ENCODE measurements at regions of chr11 and their contacts with region 1.

Region 1: GRCh38 chr11:65274735-65275682 is 13.2 kb downstream of the POLA2 start:
- DNase-seq: peak; percentile 43
- H3K4me3 ChIP-seq: no peak overlapping the region
- H3K27ac ChIP-seq: no peak overlapping the region
- H3K4me1 ChIP-seq: peaks cover 7% of the 10 kb centered on the region
- CTCF ChIP-seq: peak; percentile 75

Region 2: GRCh38 chr11:64905516-64906313 is 369.3 kb before region 1 on chr11:
- CTCF ChIA-PET with region 1: no interaction called
- POLR2A ChIA-PET with region 1: no interaction called
- intact Hi-C with region 1: no loop called
- DNase-seq: no peak
- H3K4me3 ChIP-seq: no peak overlapping the region
- H3K27ac ChIP-seq: no peak overlapping the region
- H3K4me1 ChIP-seq: no peaks in the 10 kb centered on the region
- CTCF ChIP-seq: no peak

Region 3: DNA sequence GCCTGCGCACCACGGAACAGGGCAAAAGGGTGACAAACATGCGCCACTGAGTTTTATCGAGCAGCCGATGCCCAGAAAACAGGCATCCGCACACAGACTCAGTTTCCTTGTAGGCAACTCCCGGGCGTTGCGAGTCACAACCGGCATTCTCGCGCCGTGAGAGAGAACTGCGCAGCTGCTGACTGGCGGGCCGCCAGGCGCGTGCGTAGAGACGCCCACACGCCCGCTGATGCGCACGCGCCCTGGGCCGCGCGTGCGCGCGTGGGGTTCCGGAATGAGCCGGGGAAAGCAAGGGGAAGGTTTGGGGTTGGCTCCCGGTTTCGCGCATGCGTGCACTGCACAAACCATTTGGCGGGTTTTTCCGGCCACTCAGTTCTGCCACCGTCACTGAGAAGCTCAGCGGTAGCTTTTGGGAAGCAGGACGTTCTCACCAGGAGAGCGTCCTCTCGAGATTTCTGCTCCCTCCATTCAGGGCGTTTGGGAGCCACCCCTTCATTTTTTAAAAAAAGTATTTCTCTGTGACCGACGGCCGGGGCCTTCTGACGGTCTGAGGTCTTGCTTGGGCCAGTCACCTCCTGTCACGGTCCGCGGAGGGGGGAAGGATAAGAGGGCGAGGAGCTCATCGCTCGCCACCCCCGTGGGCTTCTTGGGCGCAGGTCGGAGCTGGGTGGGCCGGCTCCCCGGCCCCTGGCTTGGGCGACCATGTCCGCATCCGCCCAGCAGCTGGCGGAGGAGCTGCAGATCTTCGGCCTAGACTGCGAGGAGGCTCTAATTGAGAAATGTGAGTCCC is 13.2 kb before region 1 on chr11 and contains the start of gene POLA2:
- CTCF ChIA-PET with region 1: interaction called, 3 read pairs
- POLR2A ChIA-PET with region 1: interaction called, 11 read pairs
- intact Hi-C with region 1: no loop called
- DNase-seq: peak; percentile 98
- H3K4me3 ChIP-seq: peak within 1 kb of the TSS; percentile 78
- H3K27ac ChIP-seq: peak within 1 kb of the TSS; percentile 70
- H3K4me1 ChIP-seq: peaks cover 25% of the 10 kb centered on the region
- CTCF ChIP-seq: no peak
- total RNA-seq, gene POLA2: 47.5 and 50.0 TPM in 2 replicates

Region 4: DNA sequence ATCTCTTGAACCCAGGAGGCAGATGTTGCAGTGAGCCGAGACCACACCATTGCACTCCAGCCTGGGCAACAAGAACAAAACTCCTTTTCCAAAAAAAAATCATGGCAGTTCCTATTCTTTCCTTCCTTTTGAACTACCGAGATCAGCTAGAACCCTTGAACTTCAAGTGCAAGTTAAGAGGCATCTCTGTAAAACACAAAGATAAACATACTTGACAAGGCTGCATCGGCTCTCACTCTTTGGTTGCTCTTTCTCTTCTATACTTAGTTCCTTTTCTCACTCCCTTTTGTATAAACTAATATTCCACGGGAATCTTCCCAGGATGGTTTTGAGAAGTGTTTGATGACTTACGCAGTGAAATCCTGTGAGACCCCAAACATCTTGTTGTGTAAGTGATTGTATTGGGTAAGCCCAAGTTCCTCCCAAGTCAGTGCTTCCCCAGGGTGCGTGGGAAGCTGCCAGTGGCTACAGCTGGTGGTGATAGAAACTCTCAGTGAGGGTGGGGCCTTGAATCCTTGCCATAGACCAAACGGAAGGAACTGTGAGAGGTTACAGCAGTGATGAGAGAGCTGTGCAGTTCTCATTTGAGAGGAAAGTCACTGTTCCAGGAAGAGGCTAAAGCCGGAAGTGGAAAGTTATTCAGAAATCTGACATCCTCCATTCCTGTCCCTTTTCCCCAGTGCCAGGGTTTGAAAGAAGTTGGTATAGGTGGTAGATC is 15.6 kb after region 1 on chr11:
- CTCF ChIA-PET with region 1: no interaction called
- POLR2A ChIA-PET with region 1: interaction called, 10 read pairs
- intact Hi-C with region 1: no loop called
- DNase-seq: no peak
- H3K4me3 ChIP-seq: no peak overlapping the region
- H3K27ac ChIP-seq: no peak overlapping the region
- H3K4me1 ChIP-seq: no peaks in the 10 kb centered on the region
- CTCF ChIP-seq: no peak

Region 5: DNA sequence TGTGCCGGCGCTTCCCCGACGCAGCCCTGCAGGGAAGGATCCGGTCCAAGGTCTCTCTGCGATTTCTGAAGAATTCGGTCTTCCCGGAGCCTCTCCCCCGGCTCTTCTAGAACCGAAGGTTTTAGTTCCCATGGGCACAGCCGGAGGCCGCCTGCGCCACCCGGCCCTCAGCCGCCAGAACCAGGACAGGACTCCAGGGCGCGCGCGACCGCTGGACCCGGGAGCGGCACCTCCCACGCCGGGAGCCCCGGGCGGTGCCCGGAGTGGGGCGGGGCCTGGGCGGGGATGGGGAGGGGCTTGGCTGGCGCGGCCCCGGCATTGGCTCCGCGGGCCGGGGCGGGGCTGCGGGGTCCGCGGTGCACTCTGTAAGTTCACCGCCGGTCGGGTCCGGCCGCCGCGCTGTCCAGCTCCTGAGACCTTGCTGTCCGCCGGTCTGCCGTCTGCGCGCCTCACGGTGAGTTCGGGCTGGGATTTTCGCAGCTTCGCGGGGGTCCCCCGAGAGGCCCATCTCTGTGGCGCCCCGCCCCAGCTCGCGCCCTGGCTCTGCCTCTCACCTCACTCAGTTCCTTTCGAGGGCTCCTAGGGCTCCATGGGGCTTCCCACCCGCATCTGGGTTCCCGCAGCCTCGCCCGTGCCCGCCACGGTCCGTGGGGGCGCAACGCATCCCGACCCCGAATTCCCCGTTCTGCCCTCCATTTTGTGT is 39.6 kb after region 1 on chr11 and contains the start of gene CDC42EP2:
- CTCF ChIA-PET with region 1: interaction called, 3 read pairs
- POLR2A ChIA-PET with region 1: interaction called, 3 read pairs
- intact Hi-C with region 1: loop called (anchors 5 kb)
- DNase-seq: peak; percentile 74
- H3K4me3 ChIP-seq: peak within 1 kb of the TSS; percentile 74
- H3K27ac ChIP-seq: no peak within 1 kb of the TSS
- H3K4me1 ChIP-seq: peaks cover 9% of the 10 kb centered on the region
- CTCF ChIP-seq: no peak
- total RNA-seq, gene CDC42EP2: not detected in 2 replicates

Measured in OCI-LY7 (cell line).